ENCODE measurements at regions of chr5 and their contacts with region 1.

Region 1: DNA sequence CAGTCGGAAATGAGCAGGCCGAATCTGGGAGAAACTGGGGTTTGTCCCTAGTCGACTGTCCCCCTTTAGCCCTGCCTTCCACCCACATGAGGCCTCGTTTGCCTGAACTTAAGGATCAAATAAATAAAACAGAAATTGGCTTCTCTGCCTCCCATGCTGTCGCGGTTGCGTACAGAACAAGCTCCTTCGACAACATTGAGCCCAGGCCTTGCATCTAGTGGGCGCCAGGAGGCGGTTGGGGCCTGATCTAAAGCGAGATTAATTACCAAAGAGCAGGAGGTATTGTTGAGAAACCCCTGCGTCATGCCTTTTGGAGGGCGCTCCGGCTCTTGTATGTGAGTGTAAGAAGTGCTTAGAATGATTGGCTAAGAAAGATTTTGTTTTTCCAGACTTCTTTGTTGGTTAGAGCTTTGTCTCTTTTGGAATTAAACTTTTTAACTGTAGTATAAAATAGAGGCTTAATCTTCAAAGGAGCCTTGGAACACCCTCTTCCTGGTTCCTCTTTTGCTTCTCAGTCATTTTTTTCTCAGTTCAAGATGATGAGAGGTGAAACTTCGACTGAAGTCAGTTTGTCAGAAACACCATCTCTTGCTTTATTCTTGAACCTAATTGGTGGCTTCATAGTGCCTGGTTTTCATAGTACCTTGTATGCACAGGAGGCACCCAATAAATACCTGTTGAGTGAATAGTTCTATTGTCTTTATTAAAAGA is 827 bp downstream of the ATP6V0E1 start:
- DNase-seq: peak; percentile 85
- ATAC-seq: peak; percentile 87 to 89
- H3K4me3 ChIP-seq: peak overlapping the region; percentile 93
- H3K27ac ChIP-seq: peak overlapping the region; percentile 95
- H3K4me1 ChIP-seq: peaks cover 48% of the 10 kb centered on the region
- H3K27me3 ChIP-seq: no peaks in the 10 kb centered on the region
- CTCF ChIP-seq: peak; percentile 50

Region 2: GRCh38 chr5:173057062-173057924 is 72.9 kb after region 1 on chr5:
- intact Hi-C with region 1: loop called (anchors 10 kb)
- DNase-seq: peak; percentile 99
- ATAC-seq: peak; percentile 97
- H3K4me3 ChIP-seq: peak overlapping the region; percentile 100
- H3K27ac ChIP-seq: peak overlapping the region; percentile 96
- H3K4me1 ChIP-seq: peaks cover 51% of the 10 kb centered on the region
- H3K27me3 ChIP-seq: no peaks in the 10 kb centered on the region
- CTCF ChIP-seq: peak; percentile 13